ENCODE measurements at regions of chr12 and their contacts with region 1.

Region 1: GRCh38 chr12:5988659-5989116 is 43.6 kb upstream of the ANO2 start:
- DNase-seq: no peak
- H3K4me3 ChIP-seq: no peak overlapping the region
- H3K27me3 ChIP-seq: peaks cover 3% of the 10 kb centered on the region
- CTCF ChIP-seq: peak; percentile 99

Region 2: GRCh38 chr12:5499566-5500330 is 488.9 kb before region 1 on chr12:
- CTCF ChIA-PET with region 1: no interaction called
- POLR2A ChIA-PET with region 1: no interaction called
- DNase-seq: peak; percentile 90
- H3K4me3 ChIP-seq: no peak overlapping the region
- H3K27me3 ChIP-seq: no peaks in the 10 kb centered on the region
- CTCF ChIP-seq: no peak

Region 3: DNA sequence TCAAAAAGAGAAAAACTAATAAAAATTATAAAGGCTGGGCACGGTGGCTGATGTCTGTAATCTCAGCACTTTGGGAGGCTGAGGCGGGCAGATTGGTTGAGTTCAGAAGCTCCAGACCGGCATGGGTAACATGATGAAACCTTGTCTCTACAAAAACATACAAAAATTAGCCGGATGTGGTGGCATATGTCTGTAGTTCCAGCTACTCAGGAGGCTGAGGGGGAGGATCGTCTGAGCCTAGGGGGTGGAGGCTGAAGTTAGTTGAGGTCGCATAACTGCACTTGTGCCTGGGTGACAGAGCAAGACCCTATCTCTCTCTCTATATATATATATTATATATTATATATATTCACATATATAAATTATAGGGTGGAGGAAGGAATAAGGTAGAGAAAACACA is 11.1 kb before region 1 on chr12:
- CTCF ChIA-PET with region 1: interaction called, 29 read pairs
- POLR2A ChIA-PET with region 1: no interaction called
- DNase-seq: no peak
- H3K4me3 ChIP-seq: no peak overlapping the region
- H3K27me3 ChIP-seq: peaks cover 6% of the 10 kb centered on the region
- CTCF ChIP-seq: no peak

Region 4: GRCh38 chr12:6039894-6040568 is 51.3 kb after region 1 on chr12:
- CTCF ChIA-PET with region 1: interaction called, 158 read pairs
- POLR2A ChIA-PET with region 1: no interaction called
- DNase-seq: no peak
- H3K4me3 ChIP-seq: no peak overlapping the region
- H3K27me3 ChIP-seq: peaks cover 2% of the 10 kb centered on the region
- CTCF ChIP-seq: peak; percentile 92

Region 5: GRCh38 chr12:6056406-6057240 is 67.9 kb after region 1 on chr12:
- CTCF ChIA-PET with region 1: interaction called, 16 read pairs
- POLR2A ChIA-PET with region 1: no interaction called
- DNase-seq: no peak
- H3K4me3 ChIP-seq: no peak overlapping the region
- H3K27me3 ChIP-seq: no peaks in the 10 kb centered on the region
- CTCF ChIP-seq: peak; percentile 42